ENCODE measurements at regions of chr18 and their contacts with region 1.

Region 1: GRCh38 chr18:907115-907884 is 2.6 kb downstream of the ADCYAP1 start:
- DNase-seq: peak; percentile 18 to 56 (median 52)
- ATAC-seq: peak; percentile 67 to 82
- H3K4me3 ChIP-seq: peak overlapping the region; percentile 40
- H3K27ac ChIP-seq: no peak overlapping the region
- H3K4me1 ChIP-seq: peaks cover 8% of the 10 kb centered on the region
- H3K27me3 ChIP-seq: no peaks in the 10 kb centered on the region

Region 2: GRCh38 chr18:839224-840022 is 67.9 kb before region 1 on chr18:
- intact Hi-C with region 1: no loop called
- DNase-seq: peak; percentile 87 to 96 (median 95)
- ATAC-seq: peak; percentile 93 to 94
- H3K4me3 ChIP-seq: no peak overlapping the region
- H3K27ac ChIP-seq: no peak overlapping the region
- H3K4me1 ChIP-seq: no peaks in the 10 kb centered on the region
- H3K27me3 ChIP-seq: no peaks in the 10 kb centered on the region

Region 3: GRCh38 chr18:950882-951539 is 43.7 kb after region 1 on chr18:
- intact Hi-C with region 1: loop called in 1 of 4 experiments (anchors 5 kb)
- DNase-seq: no peak
- ATAC-seq: no peak
- H3K4me3 ChIP-seq: no peak overlapping the region
- H3K27ac ChIP-seq: no peak overlapping the region
- H3K4me1 ChIP-seq: no peaks in the 10 kb centered on the region
- H3K27me3 ChIP-seq: no peaks in the 10 kb centered on the region